Caco-2 (cell line): ENCODE measurements at regions of chr20 and their contacts with region 1.

Region 1: GRCh38 chr20:31723319-31724078 is 831 bp upstream of the BCL2L1 start:
- DNase-seq: peak; percentile 100
- H3K4me3 ChIP-seq: peak overlapping the region; percentile 75
- H3K4me3 Mint-ChIP-seq: peak overlapping the region; percentile 96
- H3K27ac Mint-ChIP-seq: peak overlapping the region; percentile 97
- H3K4me1 ChIP-seq: peaks cover 12% of the 10 kb centered on the region
- H3K4me1 Mint-ChIP-seq: peaks cover 19% of the 10 kb centered on the region
- H3K27me3 ChIP-seq: no peaks in the 10 kb centered on the region
- H3K27me3 Mint-ChIP-seq: no peaks in the 10 kb centered on the region
- CTCF ChIP-seq: peak; percentile 99 to 100

Region 2: GRCh38 chr20:31560094-31560899 is 163.2 kb before region 1 on chr20:
- CTCF ChIA-PET with region 1: interaction called, 25 read pairs
- POLR2A ChIA-PET with region 1: no interaction called
- intact Hi-C with region 1: loop called (anchors 2 kb)
- DNase-seq: peak; percentile 85 to 87
- H3K4me3 ChIP-seq: no peak overlapping the region
- H3K4me3 Mint-ChIP-seq: no peak overlapping the region
- H3K27ac Mint-ChIP-seq: peak overlapping the region; percentile 68
- H3K4me1 ChIP-seq: peaks cover 8% of the 10 kb centered on the region
- H3K4me1 Mint-ChIP-seq: peaks cover 4% of the 10 kb centered on the region
- H3K27me3 ChIP-seq: no peaks in the 10 kb centered on the region
- H3K27me3 Mint-ChIP-seq: no peaks in the 10 kb centered on the region
- CTCF ChIP-seq: peak; percentile 98 to 99

Region 3: GRCh38 chr20:31630187-31630790 is 93.2 kb before region 1 on chr20:
- CTCF ChIA-PET with region 1: interaction called, 212 read pairs
- POLR2A ChIA-PET with region 1: interaction called, 21 read pairs
- intact Hi-C with region 1: loop called (anchors 1 kb)
- DNase-seq: no peak
- H3K4me3 ChIP-seq: no peak overlapping the region
- H3K4me3 Mint-ChIP-seq: no peak overlapping the region
- H3K27ac Mint-ChIP-seq: no peak overlapping the region
- H3K4me1 ChIP-seq: peaks cover 9% of the 10 kb centered on the region; the same call in 1 of the 2 replicates
- H3K4me1 Mint-ChIP-seq: no peaks in the 10 kb centered on the region
- H3K27me3 ChIP-seq: no peaks in the 10 kb centered on the region
- H3K27me3 Mint-ChIP-seq: no peaks in the 10 kb centered on the region
- CTCF ChIP-seq: no peak

Region 4: GRCh38 chr20:31661625-31662371 is 61.7 kb before region 1 on chr20:
- CTCF ChIA-PET with region 1: interaction called, 394 read pairs
- POLR2A ChIA-PET with region 1: interaction called, 68 read pairs
- intact Hi-C with region 1: loop called (anchors 1 kb)
- DNase-seq: peak; percentile 87 to 90
- H3K4me3 ChIP-seq: no peak overlapping the region
- H3K4me3 Mint-ChIP-seq: peak overlapping the region; percentile 43
- H3K27ac Mint-ChIP-seq: peak overlapping the region; percentile 79
- H3K4me1 ChIP-seq: peaks cover 57% of the 10 kb centered on the region
- H3K4me1 Mint-ChIP-seq: peaks cover 68% of the 10 kb centered on the region
- H3K27me3 ChIP-seq: no peaks in the 10 kb centered on the region
- H3K27me3 Mint-ChIP-seq: no peaks in the 10 kb centered on the region
- CTCF ChIP-seq: peak; percentile 93 to 98

Region 5: DNA sequence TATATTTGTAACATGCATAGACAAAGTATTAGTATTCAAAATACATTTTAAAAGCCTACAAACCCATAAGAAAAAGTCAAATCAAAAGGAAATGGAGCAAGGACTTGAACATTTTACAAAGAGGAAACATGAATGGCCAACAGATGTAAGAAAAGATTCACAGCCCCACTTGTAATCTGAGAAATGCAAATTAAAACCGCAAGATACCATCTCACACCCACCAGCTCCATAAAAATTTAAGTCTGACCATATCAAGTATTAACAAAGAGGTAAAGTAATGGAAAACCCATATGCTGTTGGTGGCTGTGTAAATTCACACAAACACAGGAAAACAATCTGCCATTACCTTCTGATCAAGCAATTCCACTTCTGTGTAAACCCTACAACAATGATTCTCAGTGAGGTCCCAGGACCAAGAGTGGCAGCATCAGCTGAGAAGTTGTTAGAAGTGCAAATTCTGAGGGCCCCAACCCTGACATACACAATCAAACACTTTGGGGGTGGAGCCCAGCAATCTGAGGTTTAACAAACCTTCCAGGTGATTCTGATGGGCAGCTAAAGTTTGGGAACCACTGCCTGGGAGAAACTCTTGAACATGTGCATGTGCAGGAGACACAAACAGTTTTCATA is 31.7 kb before region 1 on chr20:
- CTCF ChIA-PET with region 1: interaction called, 67 read pairs
- POLR2A ChIA-PET with region 1: interaction called, 59 read pairs
- intact Hi-C with region 1: loop called (anchors 1 kb)
- DNase-seq: no peak
- H3K4me3 ChIP-seq: no peak overlapping the region
- H3K4me3 Mint-ChIP-seq: peak overlapping the region; percentile 5
- H3K27ac Mint-ChIP-seq: peak overlapping the region; percentile 27
- H3K4me1 ChIP-seq: peaks cover 62% of the 10 kb centered on the region
- H3K4me1 Mint-ChIP-seq: peaks cover 72% of the 10 kb centered on the region
- H3K27me3 ChIP-seq: no peaks in the 10 kb centered on the region
- H3K27me3 Mint-ChIP-seq: no peaks in the 10 kb centered on the region
- CTCF ChIP-seq: no peak

Region 6: GRCh38 chr20:31712564-31713311 is 10.8 kb before region 1 on chr20:
- CTCF ChIA-PET with region 1: interaction called, 48 read pairs
- POLR2A ChIA-PET with region 1: interaction called, 169 read pairs
- intact Hi-C with region 1: loop called (anchors 1 kb)
- DNase-seq: peak; percentile 98 to 99
- H3K4me3 ChIP-seq: no peak overlapping the region
- H3K4me3 Mint-ChIP-seq: peak overlapping the region; percentile 69
- H3K27ac Mint-ChIP-seq: peak overlapping the region; percentile 97
- H3K4me1 ChIP-seq: peaks cover 95% of the 10 kb centered on the region
- H3K4me1 Mint-ChIP-seq: peaks cover 86% of the 10 kb centered on the region
- H3K27me3 ChIP-seq: no peaks in the 10 kb centered on the region
- H3K27me3 Mint-ChIP-seq: no peaks in the 10 kb centered on the region
- CTCF ChIP-seq: no peak

Region 7: DNA sequence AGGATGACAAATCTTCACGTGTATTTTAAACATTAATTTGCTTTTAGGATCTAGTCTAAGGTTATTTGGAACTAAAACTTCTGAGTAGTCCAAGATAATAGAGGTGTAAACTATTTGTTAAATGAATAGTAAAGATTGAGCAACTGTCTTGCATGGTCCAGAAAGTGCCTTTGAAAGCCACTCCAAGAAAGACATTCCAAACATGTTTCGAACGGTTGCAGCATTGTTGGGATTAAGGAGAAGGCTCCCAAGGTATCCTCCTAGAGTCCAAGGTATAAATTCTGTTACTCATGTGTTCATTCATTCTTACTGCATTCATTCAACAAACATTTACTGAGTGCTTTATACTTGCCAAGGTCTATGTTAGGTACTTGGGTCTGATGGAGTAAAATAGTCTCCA is 66.9 kb after region 1 on chr20:
- CTCF ChIA-PET with region 1: interaction called, 4 read pairs
- POLR2A ChIA-PET with region 1: no interaction called
- intact Hi-C with region 1: loop called (anchors 1 kb)
- DNase-seq: peak; percentile 83 to 89
- H3K4me3 ChIP-seq: no peak overlapping the region
- H3K4me3 Mint-ChIP-seq: no peak overlapping the region
- H3K27ac Mint-ChIP-seq: no peak overlapping the region
- H3K4me1 ChIP-seq: peaks cover 39% of the 10 kb centered on the region
- H3K4me1 Mint-ChIP-seq: peaks cover 18% of the 10 kb centered on the region
- H3K27me3 ChIP-seq: no peaks in the 10 kb centered on the region
- H3K27me3 Mint-ChIP-seq: no peaks in the 10 kb centered on the region
- CTCF ChIP-seq: no peak

Region 8: DNA sequence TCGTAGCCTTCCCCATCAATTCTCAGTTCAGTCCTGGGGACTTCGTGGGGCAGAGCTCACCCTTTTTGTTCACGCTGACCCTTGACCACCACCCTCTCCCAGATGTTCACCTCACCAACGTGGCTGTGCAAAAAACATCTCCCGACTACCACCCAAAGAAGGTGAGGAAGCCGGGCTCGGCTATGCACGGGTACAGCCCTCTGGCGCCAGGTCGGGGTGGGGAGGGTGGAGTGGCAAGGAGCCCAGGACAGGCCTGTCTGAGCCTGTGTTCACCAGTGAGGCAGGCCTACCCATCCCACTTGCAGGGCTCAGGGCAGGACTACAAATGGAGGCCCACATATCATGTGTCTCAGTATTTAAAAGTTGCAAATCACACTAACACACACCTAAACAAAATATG is 210.2 kb after region 1 on chr20:
- CTCF ChIA-PET with region 1: no interaction called
- POLR2A ChIA-PET with region 1: no interaction called
- intact Hi-C with region 1: no loop called
- DNase-seq: no peak
- H3K4me3 ChIP-seq: no peak overlapping the region
- H3K4me3 Mint-ChIP-seq: no peak overlapping the region
- H3K27ac Mint-ChIP-seq: no peak overlapping the region
- H3K4me1 ChIP-seq: no peaks in the 10 kb centered on the region
- H3K4me1 Mint-ChIP-seq: no peaks in the 10 kb centered on the region
- H3K27me3 ChIP-seq: no peaks in the 10 kb centered on the region
- H3K27me3 Mint-ChIP-seq: peaks cover 12% of the 10 kb centered on the region
- CTCF ChIP-seq: no peak